Breast epithelium (tissue), 4 donors: ENCODE measurements at regions of chrX and their contacts with region 1.

Region 1: GRCh38 chrX:43514820-43515219 is 141.3 kb upstream of the MAOA start:
- DNase-seq: no peak
- H3K4me3 ChIP-seq: no peak overlapping the region
- H3K27ac ChIP-seq: no peak overlapping the region
- H3K4me1 ChIP-seq: no peaks in the 10 kb centered on the region
- H3K27me3 ChIP-seq: peaks cover 0 to 55% of the 10 kb centered on the region in 2 donors
- CTCF ChIP-seq: no peak
- POLR2A ChIP-seq: no peak

Region 2: GRCh38 chrX:43002526-43003203 is 512.2 kb before region 1 on chrX:
- intact Hi-C with region 1: no loop called
- DNase-seq: no peak
- H3K4me3 ChIP-seq: no peak overlapping the region
- H3K27ac ChIP-seq: no peak overlapping the region
- H3K4me1 ChIP-seq: no peaks in the 10 kb centered on the region
- H3K27me3 ChIP-seq: peaks cover 0 to 8% of the 10 kb centered on the region in 2 donors
- CTCF ChIP-seq: no peak
- POLR2A ChIP-seq: no peak

Region 3: DNA sequence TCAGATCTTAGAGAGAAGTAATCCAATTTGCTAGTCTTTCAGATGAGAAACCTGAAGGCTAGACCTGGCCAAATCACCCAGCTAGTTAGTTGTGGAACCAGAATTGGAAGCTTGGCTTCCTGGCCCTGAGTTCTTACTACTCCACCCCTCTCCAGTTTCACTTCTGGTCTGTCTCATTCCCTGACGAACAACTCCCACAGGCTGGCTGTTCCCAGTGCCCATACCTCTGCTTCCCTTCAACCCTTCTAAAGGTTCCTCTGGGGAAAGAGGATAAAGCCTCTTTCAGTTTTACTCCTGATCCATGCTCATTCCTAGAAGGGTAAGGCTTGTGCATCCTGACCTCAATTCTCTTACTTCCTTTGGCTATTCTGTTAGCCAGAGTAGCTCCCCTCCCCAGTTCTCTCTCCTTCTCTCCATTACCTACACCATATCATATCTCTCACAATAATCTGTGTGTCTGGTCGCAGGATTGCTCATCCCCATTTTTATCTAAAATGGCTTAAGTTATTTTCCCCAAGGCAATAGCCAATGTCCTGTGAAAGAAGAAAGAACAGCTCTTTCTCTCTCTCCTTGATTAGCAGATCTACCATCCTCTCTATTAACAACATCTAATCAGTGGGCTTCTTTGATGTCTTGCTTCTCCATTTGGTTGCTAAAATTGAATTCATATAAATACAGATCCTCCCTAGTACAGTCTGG is 13.7 kb before region 1 on chrX:
- intact Hi-C with region 1: loop called (anchors 1 kb)
- DNase-seq: no peak
- H3K4me3 ChIP-seq: no peak overlapping the region
- H3K27ac ChIP-seq: no peak overlapping the region
- H3K4me1 ChIP-seq: no peaks in the 10 kb centered on the region
- H3K27me3 ChIP-seq: peaks cover 0 to 3% of the 10 kb centered on the region in 2 donors
- CTCF ChIP-seq: no peak
- POLR2A ChIP-seq: no peak